Mammary epithelial cell (primary cell): ENCODE measurements at regions of chr14 and their contacts with region 1.

Region 1: DNA sequence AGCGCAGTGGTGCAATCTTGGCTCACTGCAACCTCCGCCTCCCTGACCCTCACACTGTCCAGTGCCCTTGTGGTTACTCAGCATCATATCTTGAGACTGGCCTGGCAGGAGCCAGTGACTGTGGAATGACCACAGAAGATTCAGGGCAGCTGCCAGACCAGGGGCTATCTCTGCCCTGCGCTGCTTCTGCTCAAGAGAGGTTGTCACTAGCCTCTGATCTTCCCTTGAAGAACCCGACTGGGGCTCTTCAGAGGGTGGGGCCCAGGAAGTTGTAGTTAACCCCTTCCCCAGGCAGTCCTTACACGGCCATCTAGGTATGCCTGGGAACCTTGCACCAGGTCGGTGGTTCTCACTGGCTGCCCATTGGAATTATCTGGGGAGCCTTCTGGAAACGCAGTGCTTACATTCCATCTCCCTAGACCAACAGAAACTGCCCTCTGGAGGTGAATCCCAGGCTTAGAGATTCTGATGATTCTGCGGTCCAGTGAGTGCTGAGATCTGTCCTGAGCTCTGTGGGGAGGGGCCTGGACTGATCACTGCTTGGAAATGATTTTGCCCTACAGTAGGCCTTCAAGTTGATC is 41.4 kb downstream of the PLEKHG3 start:
- DNase-seq: no peak
- H3K4me3 ChIP-seq: no peak overlapping the region
- H3K27ac ChIP-seq: no peak overlapping the region
- H3K4me1 ChIP-seq: peaks cover 8% of the 10 kb centered on the region
- H3K27me3 ChIP-seq: no peaks in the 10 kb centered on the region
- CTCF ChIP-seq: peak in 1 of 2 donors; percentile 39

Region 2: DNA sequence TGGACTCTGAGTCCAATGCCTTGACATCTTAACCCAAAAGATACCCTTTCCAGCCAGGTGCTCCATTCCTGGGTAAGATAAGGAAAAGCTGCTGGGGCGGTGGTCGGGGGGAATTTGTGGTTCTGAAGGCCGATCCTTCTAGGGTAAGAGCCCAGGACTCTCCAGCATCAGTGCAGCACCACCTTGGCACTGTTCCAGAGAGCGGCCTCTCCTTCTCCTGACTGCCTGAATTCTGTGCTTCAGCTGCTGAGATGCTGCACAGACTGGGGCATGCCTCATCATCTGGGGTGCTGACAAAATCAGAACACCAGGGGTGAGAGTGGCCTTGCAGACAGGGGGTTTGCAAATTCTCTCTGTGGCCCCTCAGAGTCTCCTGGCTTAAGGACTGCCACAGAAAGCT is 46.6 kb after region 1 on chr14:
- CTCF ChIA-PET with region 1: no interaction called
- dilution Hi-C with region 1: loop called (anchors 5 kb)
- in situ Hi-C with region 1: no loop called
- intact Hi-C with region 1: no loop called
- DNase-seq: no peak
- H3K4me3 ChIP-seq: no peak overlapping the region
- H3K27ac ChIP-seq: no peak overlapping the region
- H3K4me1 ChIP-seq: peaks cover 22% of the 10 kb centered on the region
- H3K27me3 ChIP-seq: no peaks in the 10 kb centered on the region
- CTCF ChIP-seq: no peak

Region 3: DNA sequence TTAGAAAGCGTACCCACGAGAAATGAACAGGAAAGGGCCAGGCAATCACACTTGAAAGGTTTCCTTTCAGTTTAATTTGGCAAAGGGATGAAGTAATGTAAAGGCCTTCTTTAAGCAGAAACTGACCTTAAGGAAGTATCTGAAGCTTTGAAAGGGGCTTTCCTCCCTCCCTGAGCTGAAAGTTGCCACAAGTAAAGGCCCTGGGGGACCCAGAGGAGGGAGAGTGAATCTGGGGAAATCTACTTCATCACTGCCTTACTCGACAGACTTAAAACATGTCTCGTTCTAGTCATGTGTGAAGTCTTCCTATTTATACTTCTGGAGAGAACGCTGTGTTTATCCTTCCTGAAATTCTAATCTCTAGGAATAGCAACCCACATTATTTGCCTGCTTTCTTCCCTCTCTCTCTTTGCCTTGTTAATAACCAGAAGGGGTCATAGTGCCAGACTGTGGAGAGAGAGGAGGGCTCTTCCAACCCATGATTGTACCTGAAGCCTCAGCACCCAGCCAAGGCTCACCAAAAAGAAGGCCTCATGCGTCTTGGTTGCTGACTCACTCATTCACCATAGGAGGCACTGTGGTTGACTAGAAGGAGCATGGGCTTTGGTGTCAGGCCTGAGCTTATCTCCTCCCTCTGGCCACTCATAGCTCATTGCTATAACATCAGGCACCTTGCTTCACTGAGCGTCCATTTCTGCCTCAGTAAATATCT is 207.2 kb after region 1 on chr14:
- CTCF ChIA-PET with region 1: no interaction called
- dilution Hi-C with region 1: no loop called
- in situ Hi-C with region 1: no loop called
- intact Hi-C with region 1: no loop called
- DNase-seq: no peak
- H3K4me3 ChIP-seq: no peak overlapping the region
- H3K27ac ChIP-seq: no peak overlapping the region
- H3K4me1 ChIP-seq: no peaks in the 10 kb centered on the region
- H3K27me3 ChIP-seq: no peaks in the 10 kb centered on the region
- CTCF ChIP-seq: no peak

Region 4: DNA sequence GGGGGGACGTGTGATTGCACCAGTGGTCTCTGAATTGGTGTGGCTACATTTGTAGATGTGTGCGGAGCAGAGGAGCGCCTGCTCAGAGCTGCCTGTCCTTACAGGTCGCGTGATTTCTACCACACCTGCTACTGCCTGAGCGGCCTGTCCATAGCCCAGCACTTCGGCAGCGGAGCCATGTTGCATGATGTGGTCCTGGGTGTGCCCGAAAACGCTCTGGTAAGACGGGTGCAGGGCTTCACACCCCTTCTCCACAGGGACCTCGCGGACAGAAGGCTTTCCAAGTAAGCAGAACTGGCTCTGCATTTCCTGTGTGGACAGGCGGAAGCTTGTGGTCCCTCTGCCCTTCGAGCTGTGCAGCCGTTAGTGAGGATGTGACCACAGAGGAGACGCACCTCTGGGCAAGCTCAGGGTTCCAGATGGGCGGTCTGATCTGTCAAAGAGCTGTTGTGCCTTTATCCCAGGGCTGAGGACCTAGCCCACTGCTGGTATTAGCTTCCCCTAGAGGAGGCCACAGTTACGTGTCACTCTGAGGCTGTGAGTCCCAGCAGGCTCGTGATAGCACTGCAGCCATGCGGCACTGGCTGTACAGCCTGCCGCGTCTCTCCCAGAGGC is 309.0 kb after region 1 on chr14:
- CTCF ChIA-PET with region 1: no interaction called
- dilution Hi-C with region 1: no loop called
- in situ Hi-C with region 1: no loop called
- intact Hi-C with region 1: no loop called
- DNase-seq: no peak
- H3K4me3 ChIP-seq: no peak overlapping the region
- H3K27ac ChIP-seq: no peak overlapping the region
- H3K4me1 ChIP-seq: no peaks in the 10 kb centered on the region
- H3K27me3 ChIP-seq: no peaks in the 10 kb centered on the region
- CTCF ChIP-seq: no peak